ENCODE measurements at regions of chr11 and their contacts with region 1.

Region 1: GRCh38 chr11:86523738-86524619 is 148.4 kb downstream of the ME3 start:
- DNase-seq: peak; percentile 95
- ATAC-seq: peak; percentile 90
- H3K4me3 ChIP-seq: peak overlapping the region; percentile 49; the same call in 1 of the 2 replicates
- H3K27ac ChIP-seq: peak overlapping the region; percentile 96
- H3K4me1 ChIP-seq: peaks cover 22% of the 10 kb centered on the region
- H3K27me3 ChIP-seq: no peaks in the 10 kb centered on the region
- CTCF ChIP-seq: no peak

Region 2: DNA sequence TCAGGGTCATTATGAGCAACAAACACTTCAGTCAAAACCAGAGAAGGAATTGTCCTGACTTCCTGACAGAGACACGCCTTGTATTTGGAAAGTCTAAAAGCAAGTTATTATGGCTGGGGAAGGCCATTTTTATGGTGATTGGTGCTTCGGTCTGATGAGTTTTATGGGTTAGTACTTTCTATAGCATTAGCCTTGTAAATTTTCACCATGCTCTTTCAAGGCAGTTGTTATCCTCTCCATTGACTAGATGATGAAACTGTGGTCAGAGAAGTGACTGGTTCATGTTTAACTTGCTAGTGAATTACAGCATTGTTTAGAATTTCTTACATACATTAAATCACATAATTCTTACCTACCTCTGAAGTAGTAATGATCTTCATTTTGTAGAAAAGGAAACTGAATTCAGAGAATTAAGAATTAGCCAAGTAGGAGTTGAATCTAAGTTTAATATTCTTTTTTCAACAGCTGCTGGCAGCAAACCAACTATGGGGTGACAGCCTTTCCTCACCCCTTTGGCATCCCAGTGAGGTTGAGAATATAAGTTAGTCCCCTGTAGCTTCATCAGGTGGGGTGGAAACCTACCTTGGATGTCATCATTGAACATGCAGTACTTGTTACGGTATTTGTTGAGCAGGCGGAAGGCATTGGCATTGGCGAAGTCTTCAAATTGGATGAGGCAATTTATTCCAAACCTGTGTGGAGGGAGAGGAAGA is 59.3 kb before region 1 on chr11:
- CTCF ChIA-PET with region 1: no interaction called
- POLR2A ChIA-PET with region 1: no interaction called
- intact Hi-C with region 1: loop called (anchors 1 kb)
- DNase-seq: peak; percentile 60
- ATAC-seq: peak; percentile 67
- H3K4me3 ChIP-seq: no peak overlapping the region
- H3K27ac ChIP-seq: peak overlapping the region; percentile 91
- H3K4me1 ChIP-seq: peaks cover 26% of the 10 kb centered on the region
- H3K27me3 ChIP-seq: no peaks in the 10 kb centered on the region
- CTCF ChIP-seq: no peak

Region 3: GRCh38 chr11:86483940-86484794 is 39.8 kb before region 1 on chr11:
- CTCF ChIA-PET with region 1: no interaction called
- POLR2A ChIA-PET with region 1: no interaction called
- intact Hi-C with region 1: loop called (anchors 1 kb)
- DNase-seq: peak; percentile 92
- ATAC-seq: peak; percentile 92
- H3K4me3 ChIP-seq: no peak overlapping the region
- H3K27ac ChIP-seq: peak overlapping the region; percentile 99
- H3K4me1 ChIP-seq: peaks cover 31% of the 10 kb centered on the region
- H3K27me3 ChIP-seq: no peaks in the 10 kb centered on the region
- CTCF ChIP-seq: no peak

Region 4: DNA sequence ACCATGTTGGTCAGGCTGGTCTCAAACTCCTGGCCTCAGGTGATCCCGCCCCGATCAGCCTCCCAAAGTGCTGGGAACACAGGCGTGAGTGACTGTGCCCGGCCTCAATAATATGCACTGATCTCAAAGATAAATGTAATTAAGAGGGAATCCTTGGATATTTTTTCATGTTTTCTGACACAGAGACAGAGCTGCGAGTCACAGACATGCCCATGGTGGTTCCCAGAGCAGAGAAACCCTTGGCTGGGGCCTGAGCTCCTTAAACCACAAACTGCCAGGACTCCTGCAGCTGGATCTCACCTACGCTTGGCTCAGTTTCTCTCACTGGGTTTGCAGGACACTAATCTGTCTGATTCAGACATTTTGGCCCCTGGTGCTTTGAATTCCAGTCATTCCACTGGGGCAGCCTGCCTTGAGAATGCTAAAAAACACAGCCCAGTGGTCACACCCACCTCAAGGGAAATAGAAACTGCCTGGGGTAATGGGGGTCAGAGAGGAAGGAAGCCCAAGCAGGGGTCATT is 26.7 kb before region 1 on chr11:
- CTCF ChIA-PET with region 1: no interaction called
- POLR2A ChIA-PET with region 1: no interaction called
- intact Hi-C with region 1: no loop called
- DNase-seq: no peak
- ATAC-seq: no peak
- H3K4me3 ChIP-seq: no peak overlapping the region
- H3K27ac ChIP-seq: no peak overlapping the region
- H3K4me1 ChIP-seq: no peaks in the 10 kb centered on the region; the same call in 1 of the 2 replicates
- H3K27me3 ChIP-seq: no peaks in the 10 kb centered on the region
- CTCF ChIP-seq: no peak

Region 5: DNA sequence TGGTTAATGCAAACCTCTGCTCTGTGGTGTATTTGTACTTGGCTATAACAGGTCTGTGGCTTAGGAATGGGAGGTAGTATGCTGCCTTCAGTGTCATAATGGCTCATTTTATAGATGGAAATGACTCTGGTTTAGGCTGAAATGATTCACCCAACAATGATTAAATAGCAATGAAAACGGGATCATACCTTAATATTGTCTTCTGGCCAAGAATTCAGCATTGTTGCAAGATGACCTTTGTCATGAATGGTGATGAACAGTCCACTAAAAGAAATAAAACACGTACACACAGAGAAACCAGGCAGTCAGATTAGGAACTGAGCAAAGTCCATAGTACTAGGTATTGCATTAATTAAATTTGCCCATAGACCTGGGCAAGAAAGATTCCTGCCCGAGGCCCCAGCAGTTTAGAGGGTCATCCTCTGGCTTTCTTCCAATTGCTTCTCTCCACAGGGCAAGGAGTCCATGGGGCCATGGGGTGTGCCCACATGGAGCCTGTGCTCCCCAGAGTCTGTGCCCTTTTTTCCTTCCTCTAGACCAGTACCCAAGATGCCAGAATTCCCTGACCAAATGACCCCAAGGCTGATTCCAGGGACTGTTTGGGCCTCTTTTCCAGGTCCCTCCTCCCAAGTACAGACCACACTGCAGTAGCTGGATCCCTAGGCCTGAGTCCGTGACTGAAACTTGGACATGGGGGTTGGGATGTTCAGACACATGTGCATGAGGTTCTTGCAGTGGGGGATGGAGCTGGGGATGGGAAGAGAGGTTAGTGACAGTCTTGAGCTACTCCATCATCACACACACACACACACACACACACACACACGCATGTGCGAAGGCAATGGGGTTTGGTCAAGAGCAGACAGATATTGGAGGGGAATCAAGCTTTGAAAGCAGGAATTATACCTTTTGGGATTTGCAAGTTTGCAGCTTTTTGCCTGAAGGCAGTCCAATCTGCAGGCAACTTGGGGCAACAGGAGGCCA is 15.1 kb before region 1 on chr11:
- CTCF ChIA-PET with region 1: no interaction called
- POLR2A ChIA-PET with region 1: no interaction called
- intact Hi-C with region 1: loop called (anchors 2 kb)
- DNase-seq: peak; percentile 92
- ATAC-seq: peak; percentile 88
- H3K4me3 ChIP-seq: peak overlapping the region; percentile 32
- H3K27ac ChIP-seq: peak overlapping the region; percentile 99
- H3K4me1 ChIP-seq: peaks cover 43% of the 10 kb centered on the region
- H3K27me3 ChIP-seq: no peaks in the 10 kb centered on the region
- CTCF ChIP-seq: no peak

Region 6: DNA sequence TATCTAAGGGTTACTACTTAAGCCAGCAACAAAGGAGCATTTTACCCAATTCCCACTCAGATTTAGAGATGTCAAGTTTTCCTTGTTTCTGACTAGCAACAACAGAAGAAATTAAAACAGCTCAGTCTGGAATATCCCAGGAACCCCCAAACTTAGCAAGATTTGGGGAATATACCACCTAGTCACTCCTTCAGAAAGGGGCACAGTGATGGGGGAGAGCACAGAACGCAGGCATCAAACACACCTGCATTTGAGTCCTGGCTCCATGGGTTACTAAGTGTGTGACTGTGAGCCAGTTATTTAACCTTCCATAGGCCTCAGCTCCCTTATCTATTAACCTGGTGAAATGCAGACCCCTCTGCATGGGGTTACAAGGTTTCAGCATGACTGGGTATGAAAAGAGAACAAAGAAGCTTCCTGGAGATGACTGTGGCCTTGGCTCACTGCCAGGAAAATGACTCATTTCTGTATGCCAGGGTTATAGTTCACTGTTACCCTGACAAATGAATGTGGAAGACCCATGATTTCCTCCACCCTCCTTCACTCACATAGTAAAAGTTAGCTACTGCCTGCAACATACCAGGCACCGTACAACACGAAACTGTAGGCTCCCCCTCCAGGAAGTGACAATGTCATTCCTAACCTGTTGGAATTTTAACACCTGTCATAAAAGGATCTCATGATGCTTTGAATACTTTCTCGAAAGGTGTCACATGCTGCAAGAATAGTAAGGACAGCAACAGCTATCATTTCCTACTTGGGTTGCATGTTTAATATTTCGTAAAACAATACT is 68.9 kb after region 1 on chr11:
- CTCF ChIA-PET with region 1: no interaction called
- POLR2A ChIA-PET with region 1: no interaction called
- intact Hi-C with region 1: loop called (anchors 5 kb)
- DNase-seq: peak; percentile 96
- ATAC-seq: peak; percentile 79
- H3K4me3 ChIP-seq: no peak overlapping the region
- H3K27ac ChIP-seq: peak overlapping the region; percentile 95
- H3K4me1 ChIP-seq: peaks cover 39% of the 10 kb centered on the region
- H3K27me3 ChIP-seq: no peaks in the 10 kb centered on the region
- CTCF ChIP-seq: no peak

Region 7: GRCh38 chr11:86608251-86608799 is 84.3 kb after region 1 on chr11:
- CTCF ChIA-PET with region 1: no interaction called
- POLR2A ChIA-PET with region 1: no interaction called
- intact Hi-C with region 1: loop called (anchors 5 kb)
- DNase-seq: peak; percentile 82
- ATAC-seq: peak; percentile 39; the same call in 1 of the 2 replicates
- H3K4me3 ChIP-seq: no peak overlapping the region
- H3K27ac ChIP-seq: peak overlapping the region; percentile 85
- H3K4me1 ChIP-seq: peaks cover 35% of the 10 kb centered on the region
- H3K27me3 ChIP-seq: no peaks in the 10 kb centered on the region
- CTCF ChIP-seq: peak; percentile 96

Measured in PC-3 (cell line).